ENCODE measurements at regions of chr11 and their contacts with region 1.

Region 1: GRCh38 chr11:97000481-97000880 is 610.7 kb downstream of the JRKL start:
- DNase-seq: no peak
- ATAC-seq: no peak
- H3K4me3 ChIP-seq: no peak overlapping the region
- H3K27ac ChIP-seq: no peak overlapping the region
- H3K4me1 ChIP-seq: no peaks in the 10 kb centered on the region
- H3K27me3 ChIP-seq: no peaks in the 10 kb centered on the region
- CTCF ChIP-seq: no peak
- EP300 ChIP-seq: no peak
- POLR2A ChIP-seq: no peak
- RAD21 ChIP-seq: no peak

Region 2: GRCh38 chr11:96986516-96986915 is 14.0 kb before region 1 on chr11:
- CTCF ChIA-PET with region 1: no interaction called
- POLR2A ChIA-PET with region 1: no interaction called
- in situ Hi-C with region 1: no loop called
- intact Hi-C with region 1: loop called (anchors 1 kb)
- DNase-seq: no peak
- ATAC-seq: no peak
- H3K4me3 ChIP-seq: no peak overlapping the region
- H3K27ac ChIP-seq: no peak overlapping the region
- H3K4me1 ChIP-seq: no peaks in the 10 kb centered on the region
- H3K27me3 ChIP-seq: no peaks in the 10 kb centered on the region
- CTCF ChIP-seq: no peak
- EP300 ChIP-seq: no peak
- POLR2A ChIP-seq: no peak
- RAD21 ChIP-seq: no peak

Measured in HepG2 (cell line).